GM12878 (cell line): ENCODE measurements at regions of chr2 and their contacts with region 1.

Region 1: DNA sequence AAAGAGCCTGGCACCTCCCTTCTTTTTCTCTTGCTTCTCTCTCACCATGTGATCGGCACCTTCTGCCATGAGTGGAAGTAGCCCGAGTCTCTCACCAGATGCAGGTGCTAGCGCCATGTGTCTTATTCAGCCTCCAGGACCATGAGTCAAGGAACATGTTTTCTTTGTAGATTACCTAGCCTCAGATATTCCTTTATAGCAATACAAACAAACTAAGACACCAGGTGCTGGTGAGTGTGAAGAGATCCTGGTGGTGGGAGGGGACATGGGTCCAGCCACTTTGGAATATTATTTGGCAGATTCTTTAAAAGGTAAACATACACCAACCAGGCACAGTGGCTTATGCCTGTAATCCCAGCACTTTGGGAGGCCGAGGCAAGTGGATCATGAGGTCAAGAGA is 5.9 kb upstream of the USP40 start:
- DNase-seq: no peak
- ATAC-seq: no peak
- H3K4me3 ChIP-seq: no peak overlapping the region
- H3K27ac ChIP-seq: no peak overlapping the region
- H3K4me1 ChIP-seq: no peaks in the 10 kb centered on the region
- H3K27me3 ChIP-seq: no peaks in the 10 kb centered on the region
- CTCF ChIP-seq: no peak
- EP300 ChIP-seq: no peak
- POLR2A ChIP-seq: no peak
- RAD21 ChIP-seq: no peak

Region 2: DNA sequence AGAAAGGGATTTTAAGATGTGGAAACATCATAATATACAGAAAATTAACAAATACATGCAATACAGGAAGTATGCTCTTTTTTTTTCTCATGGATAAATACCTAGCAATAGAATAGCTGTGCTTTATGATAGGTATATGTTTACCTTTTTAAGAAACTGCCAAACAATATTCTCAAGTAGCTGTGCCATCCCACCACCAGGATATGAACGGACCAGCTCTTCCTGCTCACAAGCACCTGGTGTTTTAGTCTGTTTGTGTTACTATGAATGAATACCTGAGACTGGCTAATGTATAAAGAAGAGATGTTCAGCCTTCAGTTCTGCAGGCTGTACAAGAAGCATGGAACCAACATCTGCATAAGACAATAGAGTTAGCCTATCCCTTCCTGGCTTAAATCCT is 25.1 kb after region 1 on chr2:
- CTCF ChIA-PET with region 1: no interaction called
- POLR2A ChIA-PET with region 1: interaction called, 10 read pairs
- RAD21 ChIA-PET with region 1: no interaction called
- SMC1A ChIA-PET with region 1: no interaction called
- in situ Hi-C with region 1: no loop called
- intact Hi-C with region 1: no loop called
- DNase-seq: no peak
- ATAC-seq: no peak
- H3K4me3 ChIP-seq: no peak overlapping the region
- H3K27ac ChIP-seq: no peak overlapping the region
- H3K4me1 ChIP-seq: peaks cover 9% of the 10 kb centered on the region
- H3K27me3 ChIP-seq: no peaks in the 10 kb centered on the region; a peak in 1 of 4 replicates
- CTCF ChIP-seq: no peak
- EP300 ChIP-seq: no peak
- POLR2A ChIP-seq: no peak
- RAD21 ChIP-seq: no peak

Region 3: GRCh38 chr2:233854241-233854981 is 281.9 kb after region 1 on chr2 and contains the start of gene HJURP:
- CTCF ChIA-PET with region 1: no interaction called
- POLR2A ChIA-PET with region 1: no interaction called
- RAD21 ChIA-PET with region 1: no interaction called
- SMC1A ChIA-PET with region 1: no interaction called
- in situ Hi-C with region 1: no loop called
- intact Hi-C with region 1: no loop called
- DNase-seq: peak; percentile 90
- ATAC-seq: peak; percentile 98
- H3K4me3 ChIP-seq: peak within 1 kb of the TSS; percentile 88
- H3K27ac ChIP-seq: peak within 1 kb of the TSS; percentile 92
- H3K4me1 ChIP-seq: peaks cover 7% of the 10 kb centered on the region; the same call in 1 of the 2 replicates
- H3K27me3 ChIP-seq: no peaks in the 10 kb centered on the region
- CTCF ChIP-seq: no peak
- EP300 ChIP-seq: no peak
- POLR2A ChIP-seq: peak; percentile 96
- RAD21 ChIP-seq: no peak
- polyA plus RNA-seq, gene HJURP: 12.7 to 12.9 TPM